ENCODE measurements at regions of chr6 and their contacts with region 1.

Region 1: DNA sequence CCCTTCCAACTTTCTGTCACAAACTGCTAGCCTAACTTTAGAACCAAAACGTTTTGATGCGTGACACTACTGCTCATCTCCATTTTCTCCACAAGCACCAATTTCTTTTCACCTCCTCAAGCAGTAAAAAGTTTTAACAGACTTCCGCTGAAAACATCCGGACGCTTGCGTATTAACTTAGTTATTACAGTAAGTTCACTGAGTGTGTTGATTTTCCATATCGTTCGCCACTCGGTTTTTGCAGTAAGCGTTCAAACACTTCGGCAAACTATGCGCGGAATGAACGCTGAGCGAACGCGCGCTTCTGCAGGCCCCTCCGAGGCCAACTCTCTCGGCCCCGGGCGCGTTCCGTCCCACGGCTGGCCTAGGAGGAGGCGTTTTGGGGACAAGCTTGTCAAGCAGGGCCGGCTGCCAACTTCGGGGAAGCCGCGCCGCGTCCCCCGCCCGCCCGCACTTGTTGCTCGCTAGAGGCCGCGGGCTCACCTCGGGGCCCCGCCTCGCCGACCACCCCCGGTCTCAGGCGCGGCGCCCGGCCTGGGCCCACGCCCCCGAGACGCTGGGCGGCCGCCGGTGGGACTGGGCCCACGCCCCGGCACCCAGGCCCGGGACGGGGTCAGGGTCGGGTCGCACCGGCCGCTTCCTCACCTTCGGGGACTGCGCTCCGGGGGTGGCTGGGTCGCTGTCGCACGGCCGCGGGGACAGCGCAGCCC is 945 bp downstream of the PHF10 start:
- DNase-seq: peak; percentile 66

Region 2: DNA sequence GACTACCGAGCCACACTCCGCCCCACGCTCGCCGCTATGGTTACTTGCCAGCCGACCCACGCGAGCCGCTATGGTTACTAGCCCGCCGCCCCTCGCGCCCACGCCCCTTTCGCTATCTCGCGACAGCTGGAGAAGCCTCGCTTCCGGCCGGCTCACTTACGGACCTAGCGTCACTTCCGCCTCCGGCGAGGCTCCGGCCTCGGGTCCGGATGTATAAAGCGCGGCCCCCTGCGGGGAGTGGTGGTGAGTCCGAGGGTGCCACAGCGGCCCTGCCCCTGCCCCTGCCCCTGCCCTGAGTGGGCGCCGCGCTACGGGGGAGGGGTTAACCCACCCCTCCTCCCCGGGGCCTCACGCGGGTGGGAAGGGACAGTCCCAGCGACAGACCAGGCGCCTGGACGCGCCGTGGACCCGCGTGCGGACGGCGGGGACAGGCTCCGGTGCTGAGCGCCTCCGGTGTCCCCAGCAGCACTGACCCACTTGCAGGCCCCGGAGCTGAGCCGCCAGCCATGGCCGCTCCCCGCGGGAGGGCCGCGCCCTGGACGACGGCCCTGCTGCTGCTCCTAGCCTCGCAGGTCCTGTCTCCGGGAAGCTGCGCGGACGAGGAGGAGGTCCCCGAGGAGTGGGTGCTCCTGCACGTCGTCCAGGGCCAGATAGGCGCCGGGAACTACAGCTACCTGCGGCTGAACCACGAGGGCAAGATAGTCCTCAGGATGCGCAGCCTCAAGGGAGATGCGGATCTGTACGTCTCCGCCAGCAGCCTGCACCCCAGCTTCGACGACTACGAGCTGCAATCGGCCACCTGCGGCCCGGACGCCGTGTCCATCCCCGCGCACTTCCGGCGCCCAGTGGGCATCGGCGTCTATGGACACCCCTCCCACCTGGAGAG is 21.2 kb before region 1 on chr6 and contains the starts of genes C6orf120 and WDR27:
- CTCF ChIA-PET with region 1: no interaction called
- POLR2A ChIA-PET with region 1: interaction called, 17 read pairs
- DNase-seq: peak; percentile 98